Adrenal gland (tissue), 19 donors: ENCODE measurements at regions of chr3 and their contacts with region 1.

Region 1: GRCh38 chr3:125300416-125300815 is 74.7 kb downstream of the ZNF148 start:
- DNase-seq: no peak
- H3K4me3 ChIP-seq: no peak overlapping the region
- H3K27ac ChIP-seq: no peak overlapping the region
- H3K4me1 ChIP-seq: peaks cover 0 to 7% of the 10 kb centered on the region in 2 donors
- H3K27me3 ChIP-seq: no peaks in the 10 kb centered on the region
- CTCF ChIP-seq: no peak
- POLR2A ChIP-seq: no peak

Region 2: GRCh38 chr3:125367403-125368230 is 67.2 kb after region 1 on chr3:
- intact Hi-C with region 1: loop called in 1 of 2 experiments (anchors 10 kb)
- DNase-seq: peak in 2 of 7 donors; percentile 18 to 27
- H3K4me3 ChIP-seq: no peak overlapping the region
- H3K27ac ChIP-seq: peak overlapping the region in 2 of 5 donors; percentile 15 to 32
- H3K4me1 ChIP-seq: peaks cover 14 to 34% of the 10 kb centered on the region in 2 donors
- H3K27me3 ChIP-seq: no peaks in the 10 kb centered on the region
- CTCF ChIP-seq: no peak
- POLR2A ChIP-seq: no peak